Activated naive CD4-positive, alpha-beta T cell treated with anti-CD3 and anti-CD28 coated beads, Interleukin-2, amount 10 ng/mL, durations not matched to agents 7 days and 5 days (primary cell): ENCODE measurements at regions of chr3 and their contacts with region 1.

Region 1: DNA sequence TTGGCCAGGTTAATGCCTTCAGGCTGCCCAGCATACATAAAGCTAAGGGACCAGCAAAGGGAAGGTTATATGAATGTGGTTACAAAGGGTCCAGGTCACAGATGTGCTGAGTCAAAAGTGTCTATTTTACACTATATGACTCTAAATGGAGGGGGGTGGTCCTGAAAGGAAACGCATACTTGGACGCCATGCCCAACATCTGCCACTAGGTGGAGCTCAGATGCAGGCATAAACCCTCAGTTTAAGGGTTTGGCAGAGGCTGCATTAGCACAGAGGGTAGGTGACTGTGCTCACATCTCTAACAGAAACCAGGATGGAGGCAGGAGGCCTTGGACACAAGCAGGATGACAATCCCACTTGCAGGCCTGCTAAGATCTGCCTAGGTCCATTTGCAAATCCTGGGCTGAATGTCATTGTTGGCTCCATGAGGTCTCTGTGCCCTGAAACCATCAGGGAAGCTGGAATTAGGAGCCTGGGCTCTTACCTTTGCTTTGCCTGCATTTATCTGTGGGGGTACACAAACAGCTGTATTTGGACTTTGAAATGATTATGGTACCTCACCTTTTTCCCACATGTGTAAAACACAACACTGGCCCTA is 55.8 kb downstream of the ZNF621 start:
- DNase-seq: peak; percentile 73
- H3K4me3 Mint-ChIP-seq: no peak overlapping the region
- H3K27ac Mint-ChIP-seq: no peak overlapping the region
- H3K4me1 Mint-ChIP-seq: no peaks in the 10 kb centered on the region
- H3K27me3 Mint-ChIP-seq: peaks cover 19% of the 10 kb centered on the region

Region 2: GRCh38 chr3:40329071-40329470 is 251.5 kb before region 1 on chr3:
- CTCF ChIA-PET with region 1: interaction called, 21 read pairs
- DNase-seq: no peak
- H3K4me3 Mint-ChIP-seq: no peak overlapping the region
- H3K27ac Mint-ChIP-seq: no peak overlapping the region
- H3K4me1 Mint-ChIP-seq: peaks cover 3% of the 10 kb centered on the region
- H3K27me3 Mint-ChIP-seq: peaks cover 13% of the 10 kb centered on the region

Region 3: DNA sequence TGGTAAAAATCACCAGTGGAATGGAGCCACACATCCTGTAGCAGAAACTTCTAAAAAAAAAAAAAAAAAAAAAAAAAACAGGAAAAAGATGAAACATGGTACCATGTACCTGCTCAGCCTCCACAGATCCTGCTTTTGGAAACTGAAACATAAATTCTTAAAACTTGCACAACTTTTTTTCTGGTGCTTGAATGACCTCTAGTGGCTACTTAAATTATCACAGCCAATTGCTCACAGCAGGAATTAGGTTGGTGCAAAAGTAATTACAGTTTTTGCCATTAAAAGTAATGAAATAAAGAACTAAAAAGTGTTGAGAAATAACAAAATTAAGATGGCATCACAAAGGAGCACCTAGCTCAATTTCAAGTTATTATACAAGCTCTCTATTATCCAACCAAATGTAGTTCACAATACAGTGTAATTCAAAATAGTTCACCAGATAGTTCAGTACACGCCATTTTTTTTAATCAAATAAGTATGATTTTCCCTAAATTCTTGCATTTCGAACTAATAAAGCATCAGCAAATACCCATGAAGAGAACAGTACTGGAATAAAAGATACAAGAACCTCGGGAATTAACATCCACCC is 1300.7 kb after region 1 on chr3:
- CTCF ChIA-PET with region 1: interaction called, 12 read pairs
- DNase-seq: no peak
- H3K4me3 Mint-ChIP-seq: no peak overlapping the region
- H3K27ac Mint-ChIP-seq: no peak overlapping the region
- H3K4me1 Mint-ChIP-seq: no peaks in the 10 kb centered on the region
- H3K27me3 Mint-ChIP-seq: no peaks in the 10 kb centered on the region